Pancreas (tissue), 10 donors: ENCODE measurements at regions of chr12 and their contacts with region 1.

Region 1: GRCh38 chr12:541676-542324 is 82.1 kb downstream of the B4GALNT3 start:
- DNase-seq: peak in 1 of 6 donors; percentile 51
- ATAC-seq: no peak
- H3K4me3 ChIP-seq: no peak overlapping the region
- H3K27ac ChIP-seq: peak overlapping the region in 1 of 4 donors; percentile 12
- H3K4me1 ChIP-seq: peaks cover 0 to 4% (median 0%) of the 10 kb centered on the region in 3 donors
- H3K27me3 ChIP-seq: no peaks in the 10 kb centered on the region
- CTCF ChIP-seq: no peak

Region 2: GRCh38 chr12:459430-460258 is 82.2 kb before region 1 on chr12 and contains the start of gene B4GALNT3:
- intact Hi-C with region 1: loop called in 1 of 3 experiments (anchors 5 kb)
- DNase-seq: peak; percentile 62 to 87 (median 74)
- ATAC-seq: peak; percentile 89 to 91 (median 90)
- H3K4me3 ChIP-seq: peak within 1 kb of the TSS; percentile 35 to 68 (median 58)
- H3K27ac ChIP-seq: peak within 1 kb of the TSS in 1 of 4 donors; percentile 53
- H3K4me1 ChIP-seq: peaks cover 0 to 4% (median 0%) of the 10 kb centered on the region in 3 donors
- H3K27me3 ChIP-seq: no peaks in the 10 kb centered on the region
- CTCF ChIP-seq: no peak
- total RNA-seq, gene B4GALNT3: 3.8 to 19.5 (median 6.0) TPM